ENCODE measurements at regions of chr3 and their contacts with region 1.

Region 1: DNA sequence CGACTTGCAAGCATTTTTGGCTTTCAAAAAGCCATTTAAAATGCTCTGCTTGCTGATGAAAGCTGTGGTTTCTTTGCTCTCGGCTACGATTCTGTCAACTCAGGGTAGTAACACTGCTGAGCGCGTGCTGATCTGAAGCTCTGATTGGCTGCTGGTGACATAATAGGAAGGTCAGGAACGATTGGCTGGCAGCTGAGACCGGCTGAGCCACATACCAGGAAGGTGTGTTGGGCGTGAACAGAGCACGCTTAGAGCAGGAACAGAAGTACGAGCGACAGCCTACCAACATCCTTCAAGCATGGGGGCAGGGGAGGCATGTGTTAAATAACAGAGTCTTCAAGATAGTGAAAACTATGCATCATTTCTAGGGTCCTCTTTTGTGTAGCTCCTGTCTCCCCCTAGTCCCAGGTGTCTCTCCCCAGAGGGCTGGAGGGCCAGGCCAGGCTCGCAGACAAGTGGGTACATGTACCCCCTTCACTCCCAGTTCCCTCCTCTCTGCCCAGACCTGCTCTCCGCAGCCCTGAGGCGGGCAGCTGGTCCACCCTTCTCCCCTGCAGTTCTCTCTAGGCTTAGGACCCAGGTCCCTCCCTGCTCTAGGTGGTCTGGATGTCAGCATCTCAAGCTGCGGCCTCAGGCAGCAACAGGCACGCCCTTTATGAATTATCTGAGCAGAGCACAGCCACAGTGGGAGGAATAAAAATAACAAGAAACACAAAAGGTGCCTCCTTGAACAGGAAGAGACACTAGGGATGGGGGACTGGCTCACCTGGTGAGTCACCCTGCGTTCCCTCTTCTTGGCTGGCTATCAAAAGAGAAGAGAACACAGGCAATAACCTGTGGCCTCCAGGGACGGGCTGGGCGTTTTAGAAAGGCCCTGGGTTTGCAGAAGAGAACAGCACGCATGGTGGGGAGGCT is 76.0 kb downstream of the TAMM41 start:
- DNase-seq: peak; percentile 82
- H3K4me3 Mint-ChIP-seq: peak overlapping the region; percentile 21
- H3K27ac Mint-ChIP-seq: peak overlapping the region; percentile 82
- H3K4me1 Mint-ChIP-seq: peaks cover 20% of the 10 kb centered on the region
- H3K27me3 Mint-ChIP-seq: no peaks in the 10 kb centered on the region

Region 2: DNA sequence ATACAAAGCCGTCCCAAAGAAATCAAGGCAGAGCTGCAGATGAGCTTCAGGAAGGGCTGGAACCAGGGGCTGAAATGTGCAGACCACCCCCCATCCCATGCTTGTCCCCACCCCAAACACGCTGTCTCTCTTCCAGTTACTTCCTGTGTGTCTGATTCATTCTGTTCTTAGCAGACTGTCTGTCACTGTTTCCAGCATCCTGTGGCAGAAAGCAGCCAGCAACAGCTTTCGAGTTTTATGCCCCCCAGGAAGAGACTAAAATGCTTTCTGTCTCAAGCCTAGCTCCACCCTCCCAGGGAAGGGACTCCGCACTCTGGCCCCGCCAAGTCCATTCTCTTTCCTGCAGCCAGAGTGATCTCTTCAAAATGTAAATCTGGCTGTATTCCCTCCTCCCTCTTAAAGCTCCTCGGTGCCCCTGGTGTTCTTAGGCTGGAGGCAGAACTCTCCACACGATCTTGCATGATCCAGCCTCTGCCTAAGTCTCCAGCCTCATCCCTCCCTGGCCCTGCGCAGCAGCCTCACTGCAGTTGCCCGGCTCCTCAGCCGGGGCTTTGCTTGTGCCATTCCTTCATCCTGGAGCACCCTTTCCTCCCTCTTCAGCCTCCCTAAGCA is 574.9 kb before region 1 on chr3:
- intact Hi-C with region 1: no loop called
- DNase-seq: no peak
- H3K4me3 Mint-ChIP-seq: no peak overlapping the region
- H3K27ac Mint-ChIP-seq: peak overlapping the region; percentile 8
- H3K4me1 Mint-ChIP-seq: peaks cover 16% of the 10 kb centered on the region
- H3K27me3 Mint-ChIP-seq: peaks cover 13% of the 10 kb centered on the region

Region 3: GRCh38 chr3:11785024-11785377 is 14.3 kb after region 1 on chr3:
- intact Hi-C with region 1: loop called (anchors 1 kb)
- DNase-seq: peak; percentile 36
- H3K4me3 Mint-ChIP-seq: peak overlapping the region; percentile 72
- H3K27ac Mint-ChIP-seq: peak overlapping the region; percentile 96
- H3K4me1 Mint-ChIP-seq: peaks cover 21% of the 10 kb centered on the region
- H3K27me3 Mint-ChIP-seq: no peaks in the 10 kb centered on the region